MCF 10A (cell line): ENCODE measurements at regions of chr5 and their contacts with region 1.

Region 1: DNA sequence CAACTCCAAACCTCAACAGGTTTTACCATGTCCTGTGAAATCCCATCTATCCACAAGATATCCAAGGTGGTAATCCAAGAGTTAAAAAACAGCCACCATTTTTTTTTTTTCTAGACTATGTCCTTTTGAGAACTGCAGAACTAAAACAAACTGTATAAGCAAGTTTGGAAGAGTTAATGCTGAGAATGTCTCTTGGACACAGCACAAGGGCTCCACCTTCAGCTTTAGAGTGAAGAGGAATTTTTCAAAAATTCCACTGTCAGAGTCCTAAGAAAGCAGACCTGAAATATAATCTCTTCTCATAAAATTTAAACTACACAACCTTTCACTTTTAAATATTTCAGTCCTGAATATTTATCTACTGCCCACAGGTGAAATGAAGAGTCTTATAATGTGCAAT is 167.8 kb upstream of the CCNG1 start:
- DNase-seq: peak; percentile 45
- H3K4me3 Mint-ChIP-seq: no peak overlapping the region
- H3K27ac Mint-ChIP-seq: no peak overlapping the region
- H3K4me1 Mint-ChIP-seq: no peaks in the 10 kb centered on the region
- H3K27me3 Mint-ChIP-seq: peaks cover 81% of the 10 kb centered on the region
- CTCF ChIP-seq: peak; percentile 50

Region 2: DNA sequence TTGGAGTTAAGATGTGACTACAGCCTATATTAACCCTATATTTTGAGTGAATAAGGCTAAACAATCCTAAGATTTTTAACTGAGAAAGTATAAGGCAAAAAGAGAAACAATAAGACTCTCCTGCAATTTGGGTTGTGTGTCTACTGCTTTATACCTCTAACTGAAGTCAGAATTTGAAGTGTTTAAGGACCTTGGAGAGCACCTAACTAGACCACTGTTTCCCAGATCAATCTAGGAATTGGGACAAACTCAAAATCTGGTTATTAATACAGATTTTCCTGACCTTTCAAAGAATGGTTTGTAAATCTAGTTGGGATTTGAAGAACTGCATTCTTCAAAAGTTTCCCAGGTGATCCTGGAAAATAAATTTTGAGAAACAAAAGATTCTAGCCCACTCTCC is 1379.7 kb before region 1 on chr5:
- CTCF ChIA-PET with region 1: no interaction called
- POLR2A ChIA-PET with region 1: no interaction called
- intact Hi-C with region 1: no loop called
- DNase-seq: peak; percentile 30
- H3K4me3 Mint-ChIP-seq: no peak overlapping the region
- H3K27ac Mint-ChIP-seq: no peak overlapping the region
- H3K4me1 Mint-ChIP-seq: no peaks in the 10 kb centered on the region
- H3K27me3 Mint-ChIP-seq: peaks cover 9% of the 10 kb centered on the region
- CTCF ChIP-seq: no peak

Region 3: DNA sequence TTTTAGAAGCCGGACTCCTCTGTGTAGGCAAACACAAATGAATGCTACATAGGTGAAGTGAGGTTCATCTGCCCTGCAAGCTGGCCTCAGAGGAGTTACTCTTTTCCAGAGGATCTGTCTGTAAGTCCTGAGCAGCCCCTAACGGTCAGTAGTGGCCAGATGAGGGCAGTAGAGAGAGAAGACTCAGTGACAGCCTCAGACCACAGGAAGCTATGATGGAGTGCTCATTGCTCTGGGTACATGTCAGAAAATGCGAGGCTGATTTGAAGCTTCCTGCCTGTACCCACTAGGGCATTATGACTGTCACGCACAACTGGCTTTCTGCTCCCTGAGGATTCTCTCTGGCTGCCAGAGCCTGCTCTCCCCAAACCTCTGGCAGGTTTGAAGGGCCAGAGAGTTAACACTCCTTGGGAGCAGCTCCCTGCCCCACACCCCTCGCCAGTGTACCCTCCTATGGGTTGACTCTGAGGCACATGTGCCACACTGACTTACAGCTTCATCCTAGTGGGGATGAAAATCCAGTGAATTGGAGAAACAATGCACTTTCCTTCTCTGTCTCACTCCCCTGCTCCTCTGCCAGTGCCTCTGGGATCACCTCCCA is 1060.5 kb before region 1 on chr5:
- CTCF ChIA-PET with region 1: interaction called, 5 read pairs
- POLR2A ChIA-PET with region 1: no interaction called
- intact Hi-C with region 1: loop called (anchors 2 kb)
- DNase-seq: peak; percentile 83
- H3K4me3 Mint-ChIP-seq: no peak overlapping the region
- H3K27ac Mint-ChIP-seq: no peak overlapping the region
- H3K4me1 Mint-ChIP-seq: peaks cover 12% of the 10 kb centered on the region
- H3K27me3 Mint-ChIP-seq: no peaks in the 10 kb centered on the region
- CTCF ChIP-seq: peak; percentile 71

Region 4: GRCh38 chr5:162852134-162852533 is 417.5 kb before region 1 on chr5:
- CTCF ChIA-PET with region 1: no interaction called
- POLR2A ChIA-PET with region 1: no interaction called
- intact Hi-C with region 1: loop called (anchors 10 kb)
- DNase-seq: no peak
- H3K4me3 Mint-ChIP-seq: no peak overlapping the region
- H3K27ac Mint-ChIP-seq: no peak overlapping the region
- H3K4me1 Mint-ChIP-seq: no peaks in the 10 kb centered on the region
- H3K27me3 Mint-ChIP-seq: peaks cover 11% of the 10 kb centered on the region
- CTCF ChIP-seq: peak; percentile 10

Region 5: DNA sequence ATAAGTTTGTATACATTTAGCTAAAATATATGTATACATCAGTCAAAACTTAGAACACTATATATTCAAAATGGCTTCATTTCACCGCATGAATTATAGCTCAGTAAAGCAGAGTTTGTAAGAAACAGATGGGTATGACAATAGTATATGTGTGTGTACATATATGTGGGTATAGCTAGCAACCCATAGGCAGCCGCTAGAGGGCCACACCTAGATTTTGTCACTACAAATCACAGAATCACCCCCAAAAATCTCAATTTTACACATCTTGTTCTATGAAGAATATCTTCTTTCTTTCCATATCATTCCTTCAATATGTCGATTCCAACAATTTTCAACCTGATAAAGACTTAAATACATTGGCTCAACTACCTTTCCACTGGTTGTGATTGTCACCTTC is 190.0 kb before region 1 on chr5:
- CTCF ChIA-PET with region 1: interaction called, 4 read pairs
- POLR2A ChIA-PET with region 1: no interaction called
- intact Hi-C with region 1: loop called (anchors 5 kb)
- DNase-seq: peak; percentile 31
- H3K4me3 Mint-ChIP-seq: no peak overlapping the region
- H3K27ac Mint-ChIP-seq: no peak overlapping the region
- H3K4me1 Mint-ChIP-seq: no peaks in the 10 kb centered on the region
- H3K27me3 Mint-ChIP-seq: no peaks in the 10 kb centered on the region
- CTCF ChIP-seq: peak; percentile 64